A549 (cell line): ENCODE measurements at regions of chr1 and their contacts with region 1.

Region 1: DNA sequence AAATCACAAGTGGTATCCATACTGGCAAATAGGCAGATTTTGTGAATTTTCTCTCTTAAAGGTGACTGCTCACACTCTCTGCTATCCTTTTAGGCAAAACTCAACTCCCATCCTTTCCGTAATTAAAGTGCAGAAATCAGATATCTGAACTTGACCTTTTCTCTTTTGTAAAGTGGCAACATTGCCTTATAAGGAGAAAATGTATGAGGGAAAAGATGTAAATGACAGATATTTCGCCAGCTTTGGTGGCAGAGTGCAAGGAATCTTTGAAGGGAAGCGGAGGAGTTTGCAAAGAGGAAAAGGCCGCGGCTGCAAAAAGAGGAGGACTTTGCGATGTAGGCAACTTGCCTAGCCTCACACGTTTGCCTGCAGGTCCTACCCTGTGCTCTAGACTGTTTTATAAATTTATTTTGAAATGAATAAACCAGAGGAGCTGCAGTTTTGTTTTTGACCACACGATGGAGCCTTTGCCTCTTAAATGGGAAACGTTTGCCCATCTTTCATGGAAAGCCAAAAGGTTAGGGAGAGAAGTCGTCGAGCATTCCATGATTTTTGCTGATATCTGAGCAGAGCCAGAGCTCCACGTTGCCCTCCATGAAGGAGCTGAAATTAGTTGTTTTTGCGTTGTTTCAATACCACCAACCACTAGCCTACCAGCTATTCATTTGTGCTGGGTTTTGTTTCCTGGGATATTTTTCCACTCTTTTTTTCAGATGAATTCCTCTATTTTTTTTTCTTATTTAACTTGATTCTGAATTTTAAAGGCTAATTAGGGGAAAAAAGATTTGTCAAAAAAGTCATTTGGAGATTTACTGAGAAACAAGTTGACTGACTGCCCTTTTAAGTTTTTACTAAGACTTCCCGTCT is 242.3 kb downstream of the LMX1A start:
- DNase-seq: peak; percentile 17 to 59
- ATAC-seq: peak in 1 of 2 experiments; percentile 40; a peak in 3 of 6 replicates
- H3K4me3 ChIP-seq: no peak overlapping the region
- H3K27ac ChIP-seq: no peak overlapping the region
- H3K4me1 ChIP-seq: peaks cover 16% of the 10 kb centered on the region
- CTCF ChIP-seq: peak; percentile 79
- EP300 ChIP-seq: no peak
- POLR2A ChIP-seq: no peak
- RAD21 ChIP-seq: peak; percentile 80 to 81

Region 2: DNA sequence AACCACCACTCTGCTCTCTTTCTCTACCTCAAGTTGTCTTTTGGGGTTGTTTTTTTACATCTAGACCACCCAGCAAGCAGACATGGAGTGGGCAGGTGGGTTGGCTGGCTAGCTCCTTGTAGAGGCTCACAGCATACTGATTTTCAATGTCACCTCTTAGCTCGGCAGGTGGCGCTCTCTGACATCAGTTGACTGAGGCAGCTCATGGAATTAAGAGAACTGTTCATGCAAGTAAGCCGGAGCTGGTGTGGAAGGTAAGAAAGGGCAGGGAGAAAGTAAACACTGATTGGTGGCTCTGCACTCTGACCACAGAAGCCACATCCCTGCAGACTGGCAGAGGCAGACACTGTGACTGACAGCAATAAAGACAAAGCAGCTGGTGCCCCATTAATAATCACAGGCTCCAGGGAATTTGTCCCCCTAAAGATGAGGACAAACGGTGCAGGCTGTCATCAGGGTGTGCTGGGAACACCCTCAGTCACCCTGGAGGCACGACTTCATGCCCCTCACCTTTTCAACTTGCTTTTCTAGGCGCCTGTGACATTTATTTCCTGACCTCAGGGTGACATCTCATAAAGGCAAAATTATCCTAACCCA is 15.4 kb after region 1 on chr1:
- CTCF ChIA-PET with region 1: interaction called, 25 read pairs
- POLR2A ChIA-PET with region 1: no interaction called
- DNase-seq: peak; percentile 42 to 61
- ATAC-seq: peak; percentile 90 to 95
- H3K4me3 ChIP-seq: no peak overlapping the region
- H3K27ac ChIP-seq: no peak overlapping the region
- H3K4me1 ChIP-seq: no peaks in the 10 kb centered on the region
- CTCF ChIP-seq: peak; percentile 59
- EP300 ChIP-seq: no peak
- POLR2A ChIP-seq: no peak
- RAD21 ChIP-seq: peak; percentile 46 to 54; a peak in 4 of 5 replicates

Region 3: GRCh38 chr1:165144757-165145397 is 30.6 kb after region 1 on chr1:
- CTCF ChIA-PET with region 1: interaction called, 18 read pairs
- POLR2A ChIA-PET with region 1: no interaction called
- DNase-seq: peak in 1 of 2 experiments; percentile 51
- ATAC-seq: peak; percentile 91 to 96
- H3K4me3 ChIP-seq: no peak overlapping the region
- H3K27ac ChIP-seq: no peak overlapping the region
- H3K4me1 ChIP-seq: no peaks in the 10 kb centered on the region
- CTCF ChIP-seq: peak; percentile 74
- EP300 ChIP-seq: no peak
- POLR2A ChIP-seq: no peak
- RAD21 ChIP-seq: peak; percentile 58

Region 4: DNA sequence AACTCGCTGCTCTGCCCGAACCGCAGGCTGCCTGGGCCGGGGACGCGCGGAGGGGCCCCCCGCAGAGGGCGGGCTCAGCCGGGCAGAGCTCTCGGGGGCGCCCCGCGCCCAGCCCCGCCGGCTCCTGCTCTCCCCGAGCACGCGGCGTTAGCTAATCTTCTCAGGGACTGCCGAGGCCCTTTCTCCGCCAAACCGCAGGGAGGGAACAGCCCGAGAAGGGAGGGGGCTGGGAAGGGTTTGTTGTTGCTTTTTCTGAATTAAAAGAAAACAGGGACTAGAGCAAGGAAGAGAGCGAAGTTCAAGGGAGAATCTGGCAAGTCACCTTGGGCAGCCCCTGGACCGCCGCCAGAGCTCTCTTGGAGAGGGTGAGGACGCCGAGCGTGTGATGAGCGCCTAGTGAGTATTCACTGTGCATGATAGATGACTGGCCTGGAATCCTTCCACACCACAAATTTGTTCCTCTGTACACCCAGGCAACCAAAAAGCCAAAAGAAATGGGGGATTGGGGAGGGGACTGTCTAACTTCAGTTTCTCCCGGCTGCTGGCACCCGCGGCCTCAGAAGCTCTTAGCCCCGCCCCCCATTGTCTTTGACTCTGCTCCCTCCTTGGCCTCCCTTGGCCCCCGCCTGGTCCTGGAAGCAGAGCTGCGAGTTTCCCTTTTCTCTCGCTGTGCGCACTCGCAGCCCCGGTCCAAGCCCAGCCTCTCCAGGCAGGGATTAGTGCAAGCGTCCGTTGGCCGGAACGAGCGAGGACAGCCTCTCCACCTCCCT is 262.0 kb after region 1 on chr1:
- CTCF ChIA-PET with region 1: interaction called, 10 read pairs
- POLR2A ChIA-PET with region 1: no interaction called
- DNase-seq: no peak
- ATAC-seq: peak; percentile 38 to 57; a peak in 3 of 6 replicates
- H3K4me3 ChIP-seq: no peak overlapping the region
- H3K27ac ChIP-seq: no peak overlapping the region
- H3K4me1 ChIP-seq: no peaks in the 10 kb centered on the region
- CTCF ChIP-seq: no peak
- EP300 ChIP-seq: no peak
- POLR2A ChIP-seq: no peak
- RAD21 ChIP-seq: no peak